Activated naive CD4-positive, alpha-beta T cell treated with anti-CD3 and anti-CD28 coated beads for 36 hours (primary cell): ENCODE measurements at regions of chr4 and their contacts with region 1.

Region 1: GRCh38 chr4:3047464-3048286 is 26.7 kb downstream of the HTT-AS start:
- DNase-seq: peak; percentile 91
- H3K4me3 Mint-ChIP-seq: peak overlapping the region; percentile 28
- H3K27ac Mint-ChIP-seq: peak overlapping the region; percentile 54
- H3K4me1 Mint-ChIP-seq: peaks cover 31% of the 10 kb centered on the region
- H3K27me3 Mint-ChIP-seq: no peaks in the 10 kb centered on the region

Region 2: GRCh38 chr4:3085948-3086655 is 38.4 kb after region 1 on chr4:
- CTCF ChIA-PET with region 1: no interaction called
- intact Hi-C with region 1: loop called (anchors 1 kb)
- DNase-seq: no peak
- H3K4me3 Mint-ChIP-seq: peak overlapping the region; percentile 23
- H3K27ac Mint-ChIP-seq: peak overlapping the region; percentile 86
- H3K4me1 Mint-ChIP-seq: peaks cover 69% of the 10 kb centered on the region
- H3K27me3 Mint-ChIP-seq: no peaks in the 10 kb centered on the region

Region 3: GRCh38 chr4:3201718-3202702 is 154.3 kb after region 1 on chr4:
- CTCF ChIA-PET with region 1: interaction called, 4 read pairs
- intact Hi-C with region 1: loop called (anchors 1 kb)
- DNase-seq: peak; percentile 88
- H3K4me3 Mint-ChIP-seq: peak overlapping the region; percentile 44
- H3K27ac Mint-ChIP-seq: peak overlapping the region; percentile 57
- H3K4me1 Mint-ChIP-seq: peaks cover 44% of the 10 kb centered on the region
- H3K27me3 Mint-ChIP-seq: no peaks in the 10 kb centered on the region

Region 4: DNA sequence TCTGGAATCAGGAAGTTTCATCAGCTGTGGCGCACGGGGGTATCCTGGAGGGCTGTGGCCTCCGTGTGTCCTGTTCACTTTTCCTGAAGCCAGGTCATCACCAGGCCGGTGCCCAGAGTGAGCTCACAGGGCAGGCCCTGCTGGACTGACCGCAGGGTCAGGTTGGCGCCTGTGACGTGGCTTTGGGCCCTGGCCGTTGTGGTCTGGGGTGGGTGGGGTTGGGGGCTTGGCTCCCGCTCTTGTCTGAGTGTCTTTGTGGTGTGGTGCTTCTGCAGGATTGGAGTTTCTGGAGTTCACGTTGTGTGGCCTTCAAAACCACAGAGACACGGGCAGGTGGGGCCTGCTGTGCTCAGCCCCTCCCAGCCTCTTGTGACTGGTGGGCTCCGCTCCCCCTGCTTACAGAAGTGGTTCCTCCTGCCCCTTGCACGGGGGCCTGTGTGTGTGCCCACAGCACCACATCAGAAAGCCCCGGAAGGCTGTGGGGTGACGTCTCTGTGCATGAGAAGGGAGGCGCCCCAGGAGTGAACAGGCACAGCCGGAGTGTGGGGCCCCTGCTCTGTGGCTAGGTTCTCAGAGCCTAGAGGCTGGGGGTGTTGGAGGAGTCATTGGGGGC is 254.6 kb after region 1 on chr4:
- CTCF ChIA-PET with region 1: interaction called, 3 read pairs
- intact Hi-C with region 1: loop called (anchors 1 kb)
- DNase-seq: peak; percentile 81
- H3K4me3 Mint-ChIP-seq: peak overlapping the region; percentile 59
- H3K27ac Mint-ChIP-seq: peak overlapping the region; percentile 73
- H3K4me1 Mint-ChIP-seq: peaks cover 54% of the 10 kb centered on the region
- H3K27me3 Mint-ChIP-seq: no peaks in the 10 kb centered on the region

Region 5: GRCh38 chr4:3442959-3443749 is 395.5 kb after region 1 on chr4:
- CTCF ChIA-PET with region 1: no interaction called
- intact Hi-C with region 1: loop called (anchors 1 kb)
- DNase-seq: peak; percentile 71
- H3K4me3 Mint-ChIP-seq: no peak overlapping the region
- H3K27ac Mint-ChIP-seq: no peak overlapping the region
- H3K4me1 Mint-ChIP-seq: no peaks in the 10 kb centered on the region
- H3K27me3 Mint-ChIP-seq: no peaks in the 10 kb centered on the region

Region 6: DNA sequence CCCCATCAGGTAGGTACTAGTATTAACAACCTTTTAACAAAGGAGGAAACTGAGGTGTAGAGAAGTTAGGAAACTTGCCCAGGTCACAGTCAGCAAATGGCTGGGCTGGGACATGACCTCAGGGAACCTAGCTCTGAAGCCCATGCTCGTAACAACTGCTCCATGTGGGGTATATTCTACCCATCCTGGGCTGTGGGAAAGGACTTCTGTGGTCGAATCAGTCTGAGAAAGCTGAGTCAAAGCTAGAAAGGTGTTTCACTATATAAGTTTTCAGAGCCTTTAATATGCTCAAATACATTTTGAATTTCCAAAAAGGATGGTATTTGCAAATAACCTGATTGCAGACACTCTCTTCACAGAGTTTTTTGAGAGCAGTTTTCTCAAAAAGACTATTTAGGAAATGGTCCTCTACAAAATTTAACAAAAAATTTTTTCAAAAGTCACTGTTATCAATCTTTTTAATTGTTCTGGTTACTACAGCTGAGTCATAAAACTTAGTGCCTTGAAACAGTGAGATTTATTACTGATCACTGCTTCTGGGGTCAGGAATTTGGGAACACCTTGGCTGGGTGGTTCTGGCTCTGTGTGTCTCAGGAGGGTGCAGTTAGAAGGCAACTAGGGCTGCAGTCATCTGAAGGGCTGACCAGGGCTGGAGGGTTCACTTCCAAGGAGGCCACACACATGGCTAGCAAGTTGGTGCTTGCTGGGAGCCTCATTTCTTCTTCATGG is 1392.8 kb after region 1 on chr4:
- CTCF ChIA-PET with region 1: no interaction called
- intact Hi-C with region 1: no loop called
- DNase-seq: no peak
- H3K4me3 Mint-ChIP-seq: no peak overlapping the region
- H3K27ac Mint-ChIP-seq: no peak overlapping the region
- H3K4me1 Mint-ChIP-seq: peaks cover 9% of the 10 kb centered on the region
- H3K27me3 Mint-ChIP-seq: no peaks in the 10 kb centered on the region